Cardiac septum (tissue), 1 donor: ENCODE measurements at regions of chr16 and their contacts with region 1.

Region 1: DNA sequence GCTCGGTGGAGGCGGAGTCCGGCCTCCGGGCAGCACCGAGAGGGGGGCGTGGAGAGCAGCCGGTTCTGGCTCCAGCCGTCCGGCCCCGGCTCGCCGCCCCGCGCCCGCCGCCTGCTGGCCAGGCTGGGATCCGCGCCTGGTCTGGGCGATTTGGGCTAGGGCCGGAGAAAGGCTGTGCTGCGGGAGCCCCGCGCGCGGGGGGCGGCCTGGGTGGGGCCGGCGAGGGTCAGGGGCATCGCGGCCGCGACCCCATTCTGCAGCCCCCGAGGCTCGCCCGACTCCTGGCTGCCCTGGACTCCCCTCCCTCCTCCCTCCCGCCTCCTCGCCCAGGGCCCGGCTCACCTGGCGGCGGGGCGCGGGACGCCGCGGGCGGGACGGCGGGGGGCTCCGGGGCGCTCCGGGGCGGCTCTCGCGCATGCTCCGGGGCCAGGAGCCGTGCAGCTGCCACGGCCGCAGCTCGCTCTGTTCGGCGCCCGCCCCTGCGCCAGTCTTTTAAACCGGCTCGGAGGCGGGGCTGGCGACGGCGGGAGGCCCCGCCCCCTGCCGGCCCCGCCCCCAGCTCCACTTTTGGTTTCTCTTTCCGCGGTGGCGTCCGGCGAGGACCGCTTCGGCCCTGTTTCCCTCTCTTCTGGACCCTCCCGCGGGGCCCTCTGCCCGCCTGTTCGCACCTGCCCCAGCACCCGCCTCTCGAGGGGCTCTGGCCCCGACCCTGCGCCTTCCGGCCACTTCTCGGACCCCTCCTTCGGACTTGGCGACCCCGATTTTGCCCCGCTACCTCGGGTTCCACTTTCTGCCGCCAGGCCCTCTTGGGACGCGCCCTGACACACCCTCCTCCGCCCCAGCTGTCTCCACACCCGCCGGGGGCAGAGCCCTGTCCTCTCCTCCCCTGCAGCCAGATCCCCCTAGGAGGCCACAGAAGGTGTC is at the start of gene SOCS1:
- DNase-seq: peak; percentile 96
- total RNA-seq, gene SOCS1: 1.7 TPM

Region 2: GRCh38 chr16:11032922-11033291 is 223.1 kb before region 1 on chr16:
- intact Hi-C with region 1: loop called (anchors 5 kb)
- DNase-seq: no peak

Region 3: DNA sequence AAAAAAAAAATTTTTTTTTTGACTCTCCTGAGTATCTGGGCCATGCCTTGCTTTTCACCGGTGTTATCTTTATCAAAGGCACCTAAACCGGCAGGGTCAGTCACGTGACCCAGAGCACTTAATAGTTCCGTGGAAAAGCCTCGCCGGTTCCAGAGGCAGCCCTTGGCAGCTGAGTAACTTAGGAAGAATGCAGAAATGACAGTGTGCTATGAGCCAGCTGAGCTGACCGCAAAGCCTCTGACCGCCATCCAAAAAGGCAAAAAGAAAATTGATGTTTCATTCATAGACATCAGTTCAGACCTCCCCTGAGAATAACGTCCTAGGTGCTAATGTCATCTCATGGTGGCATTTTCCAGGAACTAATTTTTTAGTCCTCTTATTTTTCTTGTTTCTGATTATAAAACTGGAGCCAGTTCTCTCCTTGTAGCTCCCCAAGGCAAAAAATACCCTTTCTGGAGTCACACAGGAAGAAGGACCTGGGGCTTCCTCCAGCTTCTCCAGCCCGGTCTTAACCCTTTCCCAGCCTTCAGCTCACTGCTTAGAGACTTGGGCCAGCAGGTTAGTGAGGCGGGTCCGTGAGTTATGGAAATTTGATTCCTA is 122.6 kb before region 1 on chr16:
- intact Hi-C with region 1: loop called (anchors 10 kb)
- DNase-seq: peak; percentile 83

Region 4: GRCh38 chr16:11308493-11309283 is 52.7 kb after region 1 on chr16:
- intact Hi-C with region 1: no loop called
- DNase-seq: no peak

Region 5: GRCh38 chr16:11345040-11345862 is 89.3 kb after region 1 on chr16 and contains the start of gene RMI2:
- intact Hi-C with region 1: loop called (anchors 5 kb)
- DNase-seq: peak; percentile 98
- total RNA-seq, gene RMI2: 0.43 TPM